CD8-positive, alpha-beta T cell (primary cell): ENCODE measurements at regions of chrX and their contacts with region 1.

Region 1: DNA sequence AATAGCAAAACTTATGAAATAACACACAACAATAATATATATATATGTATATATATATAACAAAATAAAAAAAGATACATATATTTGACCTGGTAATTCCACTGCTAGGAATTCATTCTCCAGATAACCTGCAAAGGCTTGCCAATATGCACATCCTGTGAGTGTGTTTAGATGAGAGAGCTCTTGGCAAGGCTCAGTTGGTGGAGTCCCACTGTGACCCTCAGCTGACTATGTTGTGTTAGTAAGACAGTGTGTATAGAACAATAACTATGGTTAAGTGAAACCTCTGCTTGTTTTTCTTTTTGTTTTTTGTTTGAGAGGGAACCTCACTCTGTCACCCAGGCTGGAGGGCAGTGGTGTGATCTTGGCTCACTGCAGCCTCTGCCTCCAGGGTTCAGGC is 39.5 kb upstream of the RBMX start:
- DNase-seq: no peak
- ATAC-seq: no peak
- H3K4me3 ChIP-seq: no peak overlapping the region
- H3K4me3 Mint-ChIP-seq: no peak overlapping the region
- H3K27ac ChIP-seq: no peak overlapping the region
- H3K27ac Mint-ChIP-seq: no peak overlapping the region
- H3K4me1 ChIP-seq: no peaks in the 10 kb centered on the region
- H3K4me1 Mint-ChIP-seq: peaks cover 2% of the 10 kb centered on the region
- H3K27me3 ChIP-seq: no peaks in the 10 kb centered on the region
- H3K27me3 Mint-ChIP-seq: no peaks in the 10 kb centered on the region
- CTCF ChIP-seq: no peak

Region 2: GRCh38 chrX:136572030-136572429 is 348.0 kb before region 1 on chrX:
- CTCF ChIA-PET with region 1: interaction called, 4 read pairs
- POLR2A ChIA-PET with region 1: no interaction called
- intact Hi-C with region 1: loop called (anchors 1 to 10 kb)
- DNase-seq: peak in 2 of 9 experiments; percentile 16 to 26
- ATAC-seq: no peak
- H3K4me3 ChIP-seq: no peak overlapping the region
- H3K4me3 Mint-ChIP-seq: no peak overlapping the region
- H3K27ac ChIP-seq: no peak overlapping the region
- H3K27ac Mint-ChIP-seq: no peak overlapping the region
- H3K4me1 ChIP-seq: peaks cover 5% of the 10 kb centered on the region
- H3K4me1 Mint-ChIP-seq: peaks cover 6% of the 10 kb centered on the region
- H3K27me3 ChIP-seq: no peaks in the 10 kb centered on the region
- H3K27me3 Mint-ChIP-seq: no peaks in the 10 kb centered on the region
- CTCF ChIP-seq: no peak

Region 3: GRCh38 chrX:136577552-136577951 is 342.4 kb before region 1 on chrX:
- CTCF ChIA-PET with region 1: interaction called, 4 read pairs
- POLR2A ChIA-PET with region 1: no interaction called
- intact Hi-C with region 1: loop called (anchors 1 to 10 kb)
- DNase-seq: peak; percentile 30 to 79 (median 62)
- ATAC-seq: peak; percentile 99
- H3K4me3 ChIP-seq: no peak overlapping the region
- H3K4me3 Mint-ChIP-seq: no peak overlapping the region
- H3K27ac ChIP-seq: no peak overlapping the region
- H3K27ac Mint-ChIP-seq: peak overlapping the region; percentile 46
- H3K4me1 ChIP-seq: peaks cover 3% of the 10 kb centered on the region
- H3K4me1 Mint-ChIP-seq: peaks cover 7% of the 10 kb centered on the region
- H3K27me3 ChIP-seq: no peaks in the 10 kb centered on the region
- H3K27me3 Mint-ChIP-seq: no peaks in the 10 kb centered on the region
- CTCF ChIP-seq: peak; percentile 55

Region 4: DNA sequence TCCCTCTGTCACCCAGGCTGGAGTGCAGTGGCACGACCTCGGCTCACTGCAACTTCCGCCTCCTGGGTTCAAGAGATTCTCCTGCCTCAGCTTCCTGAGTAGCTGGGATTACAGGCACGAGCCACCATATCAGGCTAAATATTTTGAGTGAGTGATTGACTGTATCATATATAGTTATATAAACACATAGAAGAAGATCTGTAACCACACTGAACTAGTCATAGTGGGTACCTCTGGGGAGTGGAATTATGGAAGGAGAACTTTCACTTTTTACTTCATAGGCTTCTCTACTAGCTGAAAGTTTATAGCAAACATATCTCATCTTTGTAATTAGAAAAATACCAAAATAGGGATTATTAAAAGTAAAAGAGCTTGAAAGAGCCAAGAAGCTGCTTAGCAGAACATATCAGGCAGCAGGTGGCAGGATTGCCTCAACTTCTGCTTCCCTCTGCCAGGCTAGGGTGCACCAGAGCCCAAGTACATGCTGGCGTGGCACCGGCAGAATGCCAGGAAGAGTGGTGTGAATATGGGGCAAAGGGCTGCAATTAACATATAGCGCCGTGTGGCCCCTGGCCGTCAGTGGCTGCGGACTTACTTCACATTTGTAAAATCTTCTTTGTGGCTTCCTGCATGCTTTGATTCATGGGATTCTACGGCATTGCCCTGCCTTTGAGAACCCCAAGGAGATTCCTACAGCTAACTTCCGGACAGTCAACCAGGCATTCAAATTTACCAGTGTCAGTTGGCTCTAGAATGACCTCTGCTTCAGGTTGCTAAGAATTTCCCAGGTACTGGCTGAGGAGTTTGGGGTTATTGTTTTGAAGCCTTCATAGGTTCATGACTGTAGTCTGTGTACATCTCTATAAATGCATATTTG is 311.5 kb before region 1 on chrX:
- CTCF ChIA-PET with region 1: interaction called, 3 read pairs
- POLR2A ChIA-PET with region 1: no interaction called
- intact Hi-C with region 1: loop called (anchors 1 to 5 kb)
- DNase-seq: peak; percentile 16 to 75 (median 52)
- ATAC-seq: peak; percentile 72
- H3K4me3 ChIP-seq: no peak overlapping the region
- H3K4me3 Mint-ChIP-seq: no peak overlapping the region
- H3K27ac ChIP-seq: no peak overlapping the region
- H3K27ac Mint-ChIP-seq: peak overlapping the region; percentile 4
- H3K4me1 ChIP-seq: peaks cover 14% of the 10 kb centered on the region
- H3K4me1 Mint-ChIP-seq: peaks cover 37% of the 10 kb centered on the region
- H3K27me3 ChIP-seq: no peaks in the 10 kb centered on the region
- H3K27me3 Mint-ChIP-seq: no peaks in the 10 kb centered on the region
- CTCF ChIP-seq: peak; percentile 44

Region 5: DNA sequence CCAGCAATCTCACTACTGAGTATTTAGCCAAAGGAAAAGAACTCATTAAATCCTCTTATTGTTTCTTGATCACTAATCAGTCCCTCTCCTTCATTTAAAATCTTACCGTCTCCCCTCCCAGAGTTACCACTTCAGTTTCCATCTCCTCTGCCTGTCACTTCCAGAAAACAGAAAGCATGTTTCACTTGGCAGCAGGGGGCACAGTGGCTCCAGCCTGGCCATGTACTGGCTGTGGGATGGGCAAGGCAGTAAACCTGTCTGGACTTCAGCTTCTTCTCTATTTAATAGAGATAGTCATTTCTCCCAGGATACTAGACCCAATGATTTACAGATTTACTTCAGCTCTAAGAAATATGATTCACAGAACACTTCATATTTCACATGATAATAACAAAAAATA is 208.9 kb before region 1 on chrX:
- CTCF ChIA-PET with region 1: interaction called, 5 read pairs
- POLR2A ChIA-PET with region 1: no interaction called
- intact Hi-C with region 1: loop called (anchors 1 to 5 kb)
- DNase-seq: peak in 3 of 9 experiments; percentile 15 to 32 (median 23)
- ATAC-seq: no peak
- H3K4me3 ChIP-seq: no peak overlapping the region
- H3K4me3 Mint-ChIP-seq: no peak overlapping the region
- H3K27ac ChIP-seq: no peak overlapping the region
- H3K27ac Mint-ChIP-seq: peak overlapping the region; percentile 90
- H3K4me1 ChIP-seq: peaks cover 25% of the 10 kb centered on the region
- H3K4me1 Mint-ChIP-seq: peaks cover 40% of the 10 kb centered on the region
- H3K27me3 ChIP-seq: no peaks in the 10 kb centered on the region
- H3K27me3 Mint-ChIP-seq: no peaks in the 10 kb centered on the region
- CTCF ChIP-seq: no peak

Region 6: DNA sequence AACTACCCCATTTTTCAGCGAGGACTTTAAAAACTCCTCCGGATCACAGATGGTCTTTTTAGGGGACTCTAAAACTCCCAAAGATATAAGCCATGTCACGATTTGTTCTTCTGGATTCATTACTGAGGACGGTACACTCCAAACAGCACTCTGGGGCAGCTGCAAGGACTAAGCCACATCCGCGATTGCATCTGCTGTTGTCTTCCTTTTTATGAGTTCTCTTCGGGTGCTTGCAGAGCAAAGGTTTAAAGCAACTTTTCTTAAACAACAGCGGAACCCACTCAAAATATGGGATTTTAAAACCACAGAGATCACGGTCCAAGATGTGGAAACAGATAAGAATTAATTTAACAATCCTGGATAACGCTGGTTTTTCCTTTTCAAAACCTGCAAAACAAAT is 139.2 kb before region 1 on chrX and contains the start of gene ARHGEF6:
- CTCF ChIA-PET with region 1: no interaction called
- POLR2A ChIA-PET with region 1: no interaction called
- intact Hi-C with region 1: no loop called
- DNase-seq: peak in 7 of 9 experiments; percentile 0 to 65 (median 36)
- ATAC-seq: peak; percentile 58
- H3K4me3 ChIP-seq: peak within 1 kb of the TSS; percentile 67
- H3K4me3 Mint-ChIP-seq: peak within 1 kb of the TSS; percentile 93
- H3K27ac ChIP-seq: peak within 1 kb of the TSS; percentile 60 to 80
- H3K27ac Mint-ChIP-seq: peak within 1 kb of the TSS; percentile 96
- H3K4me1 ChIP-seq: peaks cover 44% of the 10 kb centered on the region
- H3K4me1 Mint-ChIP-seq: peaks cover 68% of the 10 kb centered on the region
- H3K27me3 ChIP-seq: no peaks in the 10 kb centered on the region
- H3K27me3 Mint-ChIP-seq: no peaks in the 10 kb centered on the region
- CTCF ChIP-seq: no peak
- total RNA-seq, gene ARHGEF6: 32.2 to 33.2 TPM